Dendritic cell treated with granulocyte-macrophage colony-stimulating factor and Interleukin-4, amounts not matched to agents 40 ng/mL and 50 ng/mL, for 4 days (primary cell): ENCODE measurements at regions of chr19 and their contacts with region 1.

Region 1: GRCh38 chr19:54023191-54023590 is 31.8 kb downstream of the CACNG6 start:
- H3K4me3 Mint-ChIP-seq: no peak overlapping the region
- H3K27ac Mint-ChIP-seq: no peak overlapping the region
- H3K4me1 Mint-ChIP-seq: peaks cover 61% of the 10 kb centered on the region
- H3K27me3 Mint-ChIP-seq: no peaks in the 10 kb centered on the region

Region 2: GRCh38 chr19:53792721-53793433 is 230.3 kb before region 1 on chr19:
- intact Hi-C with region 1: loop called (anchors 5 kb)
- H3K4me3 Mint-ChIP-seq: no peak overlapping the region
- H3K27ac Mint-ChIP-seq: no peak overlapping the region
- H3K4me1 Mint-ChIP-seq: no peaks in the 10 kb centered on the region
- H3K27me3 Mint-ChIP-seq: peaks cover 1% of the 10 kb centered on the region

Region 3: DNA sequence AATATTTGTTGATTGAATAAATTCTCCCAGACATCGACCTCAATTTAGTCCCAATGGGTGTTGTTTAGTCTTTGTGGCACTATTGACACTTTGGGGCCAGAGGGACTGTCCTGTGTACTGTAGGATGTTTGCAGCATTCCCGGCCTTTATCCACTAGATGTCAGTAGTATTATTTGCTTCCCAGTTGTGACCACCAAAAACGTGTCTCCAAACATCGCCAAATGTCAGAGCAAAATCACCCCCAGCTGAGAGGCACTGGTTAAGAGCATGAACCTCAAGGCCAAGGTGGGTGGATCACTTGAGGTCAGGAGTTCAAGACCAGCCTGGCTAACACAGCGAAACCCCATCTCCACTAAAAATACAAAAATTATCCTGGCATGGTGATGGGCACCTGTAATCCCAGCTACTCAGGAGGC is 214.5 kb before region 1 on chr19:
- intact Hi-C with region 1: loop called (anchors 2 kb)
- H3K4me3 Mint-ChIP-seq: no peak overlapping the region
- H3K27ac Mint-ChIP-seq: no peak overlapping the region
- H3K4me1 Mint-ChIP-seq: peaks cover 6% of the 10 kb centered on the region
- H3K27me3 Mint-ChIP-seq: no peaks in the 10 kb centered on the region

Region 4: GRCh38 chr19:53849237-53849676 is 173.9 kb before region 1 on chr19:
- intact Hi-C with region 1: loop called (anchors 5 kb)
- H3K4me3 Mint-ChIP-seq: peak overlapping the region; percentile 53
- H3K27ac Mint-ChIP-seq: peak overlapping the region; percentile 49
- H3K4me1 Mint-ChIP-seq: peaks cover 59% of the 10 kb centered on the region
- H3K27me3 Mint-ChIP-seq: peaks cover 15% of the 10 kb centered on the region

Region 5: DNA sequence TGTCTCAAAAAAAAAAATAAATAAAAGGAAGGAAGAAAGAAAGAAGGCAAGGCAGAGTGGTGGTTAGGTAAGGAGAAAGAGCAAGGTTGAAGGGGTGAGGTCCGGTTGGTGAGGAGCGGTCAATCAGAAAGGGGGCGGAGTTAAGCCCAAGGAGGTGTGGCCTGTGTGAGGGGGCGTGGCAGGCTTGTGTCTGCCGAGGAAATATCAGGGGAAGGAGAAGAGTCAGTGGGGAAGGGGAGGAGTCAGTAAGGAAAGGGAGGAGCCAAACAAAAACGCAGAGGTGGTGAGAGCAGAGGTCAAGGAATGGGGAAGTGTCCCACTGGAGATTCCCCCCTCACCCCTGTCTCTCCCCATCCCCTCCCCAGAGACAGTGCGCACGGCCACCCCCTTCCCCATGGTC is 108.2 kb before region 1 on chr19:
- intact Hi-C with region 1: no loop called
- H3K4me3 Mint-ChIP-seq: no peak overlapping the region
- H3K27ac Mint-ChIP-seq: no peak overlapping the region
- H3K4me1 Mint-ChIP-seq: peaks cover 12% of the 10 kb centered on the region
- H3K27me3 Mint-ChIP-seq: peaks cover 55% of the 10 kb centered on the region